Left lung (tissue), 14 donors: ENCODE measurements at regions of chr6 and their contacts with region 1.

Region 1: DNA sequence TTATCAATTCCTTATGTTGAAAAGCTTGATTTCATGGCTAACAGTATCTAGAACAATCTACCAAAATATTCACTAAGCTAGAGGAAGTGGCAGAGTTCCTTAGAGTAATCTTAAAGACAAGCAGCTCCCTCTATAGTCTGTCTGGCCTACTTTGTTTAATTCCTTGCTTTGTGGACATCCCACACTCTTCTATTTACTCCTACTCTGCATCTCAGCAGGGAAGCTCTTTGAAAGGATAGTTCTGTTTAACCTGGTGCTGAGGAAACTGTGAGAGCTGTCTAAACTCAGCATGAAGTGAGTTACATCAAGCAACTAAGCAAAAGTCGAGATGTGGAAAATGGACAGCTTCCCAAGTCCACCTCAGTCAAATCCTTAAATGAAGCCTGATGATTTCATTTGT is 4.3 kb downstream of the REV3L start:
- DNase-seq: peak in 1 of 4 donors; percentile 52
- ATAC-seq: peak; percentile 17
- H3K4me3 ChIP-seq: no peak overlapping the region
- H3K27ac ChIP-seq: peak overlapping the region in 1 of 2 donors; percentile 11
- H3K4me1 ChIP-seq: peaks cover 19 to 49% of the 10 kb centered on the region in 2 donors
- H3K27me3 ChIP-seq: no peaks in the 10 kb centered on the region
- CTCF ChIP-seq: peak in 1 of 2 donors; percentile 28

Region 2: GRCh38 chr6:111259089-111259831 is 219.5 kb before region 1 on chr6:
- intact Hi-C with region 1: loop called in 1 of 2 experiments (anchors 10 kb)
- DNase-seq: peak; percentile 99 to 100 (median 99)
- ATAC-seq: peak; percentile 99
- H3K4me3 ChIP-seq: peak overlapping the region; percentile 65 to 71
- H3K27ac ChIP-seq: peak overlapping the region; percentile 90 to 97
- H3K4me1 ChIP-seq: peaks cover 4 to 21% of the 10 kb centered on the region in 2 donors
- H3K27me3 ChIP-seq: no peaks in the 10 kb centered on the region
- CTCF ChIP-seq: peak; percentile 93 to 95

Region 3: GRCh38 chr6:111361648-111362047 is 117.1 kb before region 1 on chr6:
- intact Hi-C with region 1: loop called in 1 of 2 experiments (anchors 10 kb)
- DNase-seq: peak in 1 of 4 donors; percentile 52
- ATAC-seq: peak; percentile 65
- H3K4me3 ChIP-seq: no peak overlapping the region
- H3K27ac ChIP-seq: no peak overlapping the region
- H3K4me1 ChIP-seq: peaks cover 0 to 7% of the 10 kb centered on the region in 2 donors
- H3K27me3 ChIP-seq: no peaks in the 10 kb centered on the region
- CTCF ChIP-seq: peak in 1 of 2 donors; percentile 38